ENCODE measurements at regions of chr17 and their contacts with region 1.

Region 1: DNA sequence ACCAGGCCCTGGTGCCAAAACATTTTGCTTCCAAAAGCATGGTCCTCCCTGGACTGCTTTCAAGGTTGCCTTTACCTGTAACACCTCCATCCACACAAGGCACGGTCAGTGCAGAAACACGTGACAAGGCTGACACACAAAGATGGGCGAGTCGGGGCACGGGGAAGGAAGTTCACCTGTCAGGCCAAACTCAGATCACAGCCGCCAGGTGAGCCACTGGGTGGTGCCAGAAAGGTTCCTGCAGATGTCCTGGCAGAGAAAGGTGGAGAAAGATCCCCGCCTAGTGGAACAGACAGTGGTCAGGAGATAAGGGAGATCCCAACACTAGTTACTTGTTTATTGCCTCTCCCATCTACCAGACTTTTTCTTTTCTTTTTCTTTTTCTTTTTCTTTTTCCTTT is 155.3 kb downstream of the AIPL1 start:
- DNase-seq: peak; percentile 50
- H3K4me3 Mint-ChIP-seq: no peak overlapping the region
- H3K27ac Mint-ChIP-seq: no peak overlapping the region
- H3K4me1 Mint-ChIP-seq: no peaks in the 10 kb centered on the region
- H3K27me3 Mint-ChIP-seq: peaks cover 16% of the 10 kb centered on the region

Region 2: DNA sequence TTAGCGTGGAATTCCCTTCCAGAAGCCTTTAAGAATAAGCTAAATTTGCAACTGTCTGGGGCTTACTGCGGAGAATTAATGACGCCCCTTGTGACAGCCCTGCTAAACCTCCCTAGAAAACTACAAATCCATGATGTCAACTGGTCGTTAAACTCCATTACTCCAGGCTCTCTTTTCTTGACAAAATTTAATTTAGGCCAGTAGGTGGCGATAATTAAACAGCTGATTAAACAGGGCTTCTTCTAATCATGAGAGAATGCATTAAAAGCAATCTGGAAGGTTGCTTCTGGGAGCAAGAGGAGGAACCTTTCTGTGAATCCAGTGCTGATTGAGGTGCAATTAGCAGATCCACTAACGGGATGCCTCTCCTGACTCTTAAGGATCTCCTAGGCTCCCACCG is 687.3 kb before region 1 on chr17:
- CTCF ChIA-PET with region 1: no interaction called
- intact Hi-C with region 1: loop called (anchors 5 kb)
- DNase-seq: no peak
- H3K4me3 Mint-ChIP-seq: no peak overlapping the region
- H3K27ac Mint-ChIP-seq: no peak overlapping the region
- H3K4me1 Mint-ChIP-seq: peaks cover 1% of the 10 kb centered on the region
- H3K27me3 Mint-ChIP-seq: peaks cover 13% of the 10 kb centered on the region

Region 3: DNA sequence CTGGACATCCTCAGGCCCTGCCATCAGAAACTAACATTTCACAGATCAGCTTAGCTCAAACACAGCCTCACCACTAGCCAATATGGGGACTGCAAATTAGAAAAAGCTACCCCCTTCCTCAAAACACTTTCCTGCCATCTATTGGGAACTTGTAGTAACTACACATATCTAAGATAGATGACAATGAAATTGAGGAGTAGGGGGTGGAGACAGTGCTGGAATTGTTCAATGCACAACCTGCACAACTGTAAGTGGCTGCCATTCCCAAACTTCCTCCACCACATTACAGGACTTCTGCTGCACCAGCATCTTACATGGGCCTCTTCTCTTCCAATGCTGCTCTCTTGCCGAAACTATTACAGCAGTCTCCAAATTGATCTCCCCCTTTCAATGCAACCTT is 133.4 kb after region 1 on chr17:
- CTCF ChIA-PET with region 1: no interaction called
- intact Hi-C with region 1: loop called (anchors 1 kb)
- DNase-seq: no peak
- H3K4me3 Mint-ChIP-seq: no peak overlapping the region
- H3K27ac Mint-ChIP-seq: no peak overlapping the region
- H3K4me1 Mint-ChIP-seq: no peaks in the 10 kb centered on the region
- H3K27me3 Mint-ChIP-seq: no peaks in the 10 kb centered on the region